ENCODE measurements at regions of chr19 and their contacts with region 1.

Region 1: DNA sequence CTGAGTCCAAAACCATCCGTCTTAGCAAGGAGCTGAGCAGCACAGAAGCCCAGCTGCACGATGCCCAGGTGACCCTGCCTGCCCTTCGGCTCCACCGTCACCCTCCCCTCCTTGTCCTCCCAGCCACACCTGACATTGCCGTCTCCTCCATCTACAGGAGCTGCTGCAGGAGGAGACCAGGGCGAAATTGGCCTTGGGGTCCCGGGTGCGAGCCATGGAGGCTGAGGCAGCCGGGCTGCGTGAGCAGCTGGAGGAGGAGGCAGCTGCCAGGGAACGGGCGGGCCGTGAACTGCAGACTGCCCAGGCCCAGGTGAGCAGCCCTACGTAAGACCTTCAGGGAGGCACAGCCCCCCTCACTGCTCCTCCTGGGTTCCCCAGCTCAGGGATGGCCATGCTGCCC is 49.1 kb downstream of the KCNC3 start:
- DNase-seq: no peak
- H3K4me3 ChIP-seq: no peak overlapping the region
- H3K27ac ChIP-seq: no peak overlapping the region
- H3K4me1 ChIP-seq: no peaks in the 10 kb centered on the region
- H3K27me3 ChIP-seq: no peaks in the 10 kb centered on the region
- CTCF ChIP-seq: no peak

Region 2: DNA sequence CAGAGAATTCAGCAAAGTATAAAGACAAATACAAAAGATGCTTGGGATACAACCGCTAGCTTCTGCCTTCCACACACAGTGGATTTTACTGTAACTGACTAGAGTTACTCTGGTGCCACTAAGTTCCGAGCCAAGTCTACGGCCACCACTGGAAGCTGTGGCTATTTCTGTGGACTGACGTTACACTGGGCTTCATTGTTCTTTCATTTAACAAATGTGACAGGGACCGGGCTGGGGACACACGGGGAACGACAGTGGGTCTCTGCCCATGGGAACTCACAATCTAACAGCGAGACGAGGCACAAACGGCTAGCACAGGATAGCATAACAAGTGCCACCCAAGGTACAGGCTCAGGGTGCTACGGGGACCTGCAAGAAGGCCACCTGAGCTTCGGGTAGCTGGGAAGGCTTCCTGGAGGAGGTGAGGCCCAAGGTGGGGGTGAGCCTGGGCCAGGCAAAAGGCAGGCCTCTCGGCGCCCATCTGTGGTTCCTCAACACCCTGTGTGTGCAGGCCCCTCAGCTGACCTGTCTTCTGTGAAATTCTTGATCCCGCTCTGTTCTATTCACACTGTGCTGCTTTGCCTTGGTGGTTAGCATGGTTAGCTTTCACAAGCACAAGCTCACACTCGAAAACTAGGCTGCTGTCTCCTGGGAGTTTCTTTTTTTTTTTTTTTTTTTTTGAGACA is 373.1 kb before region 1 on chr19:
- CTCF ChIA-PET with region 1: no interaction called
- dilution Hi-C with region 1: no loop called
- in situ Hi-C with region 1: no loop called
- intact Hi-C with region 1: no loop called
- DNase-seq: no peak
- H3K4me3 ChIP-seq: no peak overlapping the region
- H3K27ac ChIP-seq: no peak overlapping the region
- H3K4me1 ChIP-seq: no peaks in the 10 kb centered on the region
- H3K27me3 ChIP-seq: no peaks in the 10 kb centered on the region
- CTCF ChIP-seq: no peak

Region 3: DNA sequence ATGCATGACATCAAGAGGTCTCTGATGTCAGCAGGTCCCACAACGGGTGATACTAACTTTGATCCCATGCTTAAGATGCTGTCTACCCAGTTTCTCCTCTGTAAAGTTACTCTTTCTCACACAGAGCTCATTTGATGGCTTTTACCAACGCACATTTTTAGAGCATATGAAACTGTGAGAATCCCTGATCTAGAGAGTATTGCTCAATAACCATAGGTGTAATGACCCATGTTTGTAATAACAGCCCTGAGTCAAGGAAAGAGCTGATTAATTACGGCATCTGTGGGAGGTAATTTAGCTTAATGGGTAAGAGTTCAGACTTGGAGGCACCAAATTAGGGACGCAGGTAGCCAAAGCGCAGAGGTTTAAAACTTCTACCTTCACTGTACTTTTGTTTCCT is 99.0 kb before region 1 on chr19:
- CTCF ChIA-PET with region 1: no interaction called
- dilution Hi-C with region 1: loop called (anchors 5 kb)
- in situ Hi-C with region 1: no loop called
- intact Hi-C with region 1: no loop called
- DNase-seq: no peak
- H3K4me3 ChIP-seq: no peak overlapping the region
- H3K27ac ChIP-seq: no peak overlapping the region
- H3K4me1 ChIP-seq: no peaks in the 10 kb centered on the region
- H3K27me3 ChIP-seq: no peaks in the 10 kb centered on the region
- CTCF ChIP-seq: no peak

Region 4: DNA sequence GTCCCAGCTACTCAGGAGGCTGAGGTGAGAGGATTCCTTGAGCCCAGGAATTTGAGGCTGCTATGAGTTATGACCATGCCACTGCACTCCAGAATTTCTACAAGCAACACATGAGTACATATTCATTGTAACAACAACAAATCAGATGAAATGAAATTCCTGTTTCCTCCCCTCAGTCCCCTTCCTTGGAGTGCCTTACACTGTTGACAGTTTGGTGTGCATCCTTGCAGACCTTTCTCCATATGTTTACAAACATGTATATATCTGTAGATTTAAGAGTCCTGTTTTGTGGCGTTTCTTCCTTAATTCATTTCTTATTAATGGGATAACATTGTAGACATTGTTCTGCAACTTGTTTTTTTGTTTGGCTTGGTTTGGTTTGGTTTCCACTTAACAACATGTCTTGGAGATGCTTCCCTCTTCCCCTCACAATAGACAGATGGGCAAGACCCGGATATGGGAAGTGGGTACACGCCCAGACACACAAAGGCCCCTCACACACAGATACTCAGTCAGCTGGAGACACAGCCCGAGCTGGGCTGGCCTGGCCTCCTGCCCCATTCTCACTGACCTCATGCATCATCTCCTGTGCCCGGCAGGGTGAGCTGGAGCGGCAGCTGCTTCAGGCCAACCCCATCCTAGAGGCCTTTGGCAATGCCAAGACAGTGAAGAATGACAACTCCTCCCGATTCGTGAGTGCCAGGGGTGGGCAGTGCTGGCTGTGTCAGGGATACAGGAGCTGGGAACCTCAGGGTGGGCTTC is 54.9 kb before region 1 on chr19:
- CTCF ChIA-PET with region 1: no interaction called
- dilution Hi-C with region 1: loop called (anchors 5 kb)
- in situ Hi-C with region 1: no loop called
- intact Hi-C with region 1: no loop called
- DNase-seq: no peak
- H3K4me3 ChIP-seq: no peak overlapping the region
- H3K27ac ChIP-seq: no peak overlapping the region
- H3K4me1 ChIP-seq: no peaks in the 10 kb centered on the region
- H3K27me3 ChIP-seq: no peaks in the 10 kb centered on the region
- CTCF ChIP-seq: no peak

Region 5: GRCh38 chr19:50333035-50333736 is 53.1 kb after region 1 on chr19:
- CTCF ChIA-PET with region 1: no interaction called
- dilution Hi-C with region 1: loop called (anchors 5 kb)
- in situ Hi-C with region 1: no loop called
- intact Hi-C with region 1: no loop called
- DNase-seq: peak; percentile 70
- H3K4me3 ChIP-seq: peak overlapping the region; percentile 3 to 43 (median 40)
- H3K27ac ChIP-seq: no peak overlapping the region
- H3K4me1 ChIP-seq: peaks cover 9% of the 10 kb centered on the region
- H3K27me3 ChIP-seq: peaks cover 20% of the 10 kb centered on the region
- CTCF ChIP-seq: no peak